PC-9 (cell line): ENCODE measurements at regions of chr22 and their contacts with region 1.

Region 1: GRCh38 chr22:50708474-50708873 is 29.5 kb upstream of the ACR start:
- DNase-seq: no peak
- H3K4me3 ChIP-seq: no peak overlapping the region
- H3K27ac ChIP-seq: no peak overlapping the region
- H3K4me1 ChIP-seq: no peaks in the 10 kb centered on the region
- H3K27me3 ChIP-seq: no peaks in the 10 kb centered on the region
- CTCF ChIP-seq: no peak

Region 2: GRCh38 chr22:50516071-50516470 is 192.4 kb before region 1 on chr22:
- CTCF ChIA-PET with region 1: interaction called, 14 read pairs
- POLR2A ChIA-PET with region 1: no interaction called
- intact Hi-C with region 1: no loop called
- DNase-seq: no peak
- H3K4me3 ChIP-seq: no peak overlapping the region
- H3K27ac ChIP-seq: no peak overlapping the region
- H3K4me1 ChIP-seq: no peaks in the 10 kb centered on the region
- H3K27me3 ChIP-seq: no peaks in the 10 kb centered on the region
- CTCF ChIP-seq: no peak

Region 3: GRCh38 chr22:50674606-50675549 is 33.6 kb before region 1 on chr22:
- CTCF ChIA-PET with region 1: no interaction called
- POLR2A ChIA-PET with region 1: no interaction called
- intact Hi-C with region 1: no loop called
- DNase-seq: peak; percentile 89 to 90
- H3K4me3 ChIP-seq: peak overlapping the region; percentile 58
- H3K27ac ChIP-seq: no peak overlapping the region
- H3K4me1 ChIP-seq: peaks cover 15% of the 10 kb centered on the region; the same call in 1 of the 2 replicates
- H3K27me3 ChIP-seq: no peaks in the 10 kb centered on the region
- CTCF ChIP-seq: no peak